ENCODE measurements at regions of chr19 and their contacts with region 1.

Region 1: DNA sequence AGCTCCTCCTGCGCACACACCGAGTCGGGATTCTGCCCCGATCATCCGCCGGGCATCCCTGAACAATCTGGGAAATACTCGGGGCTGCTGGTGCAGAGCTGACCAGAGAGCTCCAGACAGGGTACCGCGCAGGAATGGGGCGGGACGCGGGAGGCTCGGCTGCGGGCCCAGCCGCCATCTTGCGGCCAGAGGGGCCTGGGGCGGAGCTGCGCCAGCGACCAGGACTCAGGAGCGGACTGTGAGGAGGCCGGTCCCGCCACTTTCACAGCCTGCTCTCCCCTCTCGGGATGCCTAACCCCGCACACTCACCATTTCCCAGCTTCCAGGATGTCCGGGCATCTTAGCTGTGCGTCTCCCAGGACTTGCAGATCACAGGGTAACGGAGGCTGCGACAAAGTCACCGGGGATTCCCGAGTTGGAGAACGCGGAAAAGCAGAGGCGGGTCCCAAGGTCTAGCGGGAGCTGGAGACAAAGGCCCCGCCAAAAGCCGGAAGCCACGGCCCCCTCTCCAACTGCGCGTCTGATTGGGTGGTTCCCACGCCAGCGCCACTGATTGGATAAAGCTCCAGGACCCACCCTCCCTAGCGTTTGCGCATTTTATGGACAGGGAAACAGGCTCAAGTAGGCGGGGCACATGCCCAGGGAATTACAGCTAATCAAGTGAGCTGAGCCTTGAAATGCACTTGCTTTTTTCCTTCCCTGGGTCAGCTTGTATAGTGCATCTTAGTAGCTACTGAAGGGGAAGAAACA is 15.8 kb upstream of the ZNF43 start:
- DNase-seq: peak; percentile 85 to 98
- H3K4me3 ChIP-seq: peak overlapping the region; percentile 80 to 81
- H3K27ac ChIP-seq: peak overlapping the region; percentile 74 to 81
- H3K4me1 ChIP-seq: peaks cover 0 to 9% of the 10 kb centered on the region in 2 donors
- H3K27me3 ChIP-seq: no peaks in the 10 kb centered on the region
- CTCF ChIP-seq: peak in 1 of 3 experiments; percentile 1

Region 2: DNA sequence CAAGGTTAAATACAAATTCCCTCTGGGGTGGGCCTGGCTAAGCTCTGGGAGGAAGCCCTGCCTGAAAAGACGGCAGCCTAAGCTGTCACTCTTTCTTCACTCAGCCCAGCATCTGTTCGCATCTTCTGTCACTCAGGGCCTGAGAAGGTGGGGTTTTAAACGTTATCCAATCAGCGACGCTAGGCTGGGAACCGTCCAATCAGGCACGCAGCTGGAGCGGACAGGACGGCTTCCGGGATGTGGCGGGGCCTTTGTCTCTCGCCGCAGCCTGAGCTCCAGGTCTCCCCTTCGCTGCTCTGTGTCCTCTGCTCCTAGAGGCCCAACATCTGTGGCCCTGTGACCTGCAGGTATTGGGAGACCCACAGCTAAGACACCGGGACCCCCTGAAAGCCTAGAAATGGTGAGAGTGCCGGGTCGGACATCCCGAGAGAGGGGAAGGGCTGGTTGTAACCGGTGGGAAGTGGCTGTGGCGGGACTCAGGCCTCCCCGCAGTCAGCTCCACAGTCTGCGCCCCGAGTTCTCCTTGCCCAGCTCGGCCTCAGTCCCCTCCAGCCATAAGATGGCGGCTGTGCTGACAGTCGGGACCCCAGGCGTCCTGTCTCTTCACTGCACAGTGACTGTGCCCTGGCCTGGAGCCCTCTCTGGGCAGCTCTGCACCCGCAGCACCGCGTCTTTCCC is 709.8 kb before region 1 on chr19 and contains the start of gene ZNF431:
- intact Hi-C with region 1: loop called (anchors 5 kb)
- DNase-seq: peak; percentile 78 to 95
- H3K4me3 ChIP-seq: peak within 1 kb of the TSS; percentile 74 to 82
- H3K27ac ChIP-seq: peak within 1 kb of the TSS; percentile 68 to 70
- H3K4me1 ChIP-seq: peaks cover 0 to 5% of the 10 kb centered on the region in 2 donors
- H3K27me3 ChIP-seq: no peaks in the 10 kb centered on the region
- CTCF ChIP-seq: no peak
- total RNA-seq, gene ZNF431: 10.2 TPM

Region 3: GRCh38 chr19:21767065-21767800 is 84.5 kb before region 1 on chr19 and contains the start of gene ZNF100:
- intact Hi-C with region 1: loop called (anchors 2 kb)
- DNase-seq: peak; percentile 76 to 96
- H3K4me3 ChIP-seq: peak within 1 kb of the TSS; percentile 59 to 86
- H3K27ac ChIP-seq: peak within 1 kb of the TSS; percentile 88 to 89
- H3K4me1 ChIP-seq: peaks cover 0 to 3% of the 10 kb centered on the region in 2 donors
- H3K27me3 ChIP-seq: no peaks in the 10 kb centered on the region
- CTCF ChIP-seq: no peak
- total RNA-seq, gene ZNF100: 4.2 TPM

Region 4: DNA sequence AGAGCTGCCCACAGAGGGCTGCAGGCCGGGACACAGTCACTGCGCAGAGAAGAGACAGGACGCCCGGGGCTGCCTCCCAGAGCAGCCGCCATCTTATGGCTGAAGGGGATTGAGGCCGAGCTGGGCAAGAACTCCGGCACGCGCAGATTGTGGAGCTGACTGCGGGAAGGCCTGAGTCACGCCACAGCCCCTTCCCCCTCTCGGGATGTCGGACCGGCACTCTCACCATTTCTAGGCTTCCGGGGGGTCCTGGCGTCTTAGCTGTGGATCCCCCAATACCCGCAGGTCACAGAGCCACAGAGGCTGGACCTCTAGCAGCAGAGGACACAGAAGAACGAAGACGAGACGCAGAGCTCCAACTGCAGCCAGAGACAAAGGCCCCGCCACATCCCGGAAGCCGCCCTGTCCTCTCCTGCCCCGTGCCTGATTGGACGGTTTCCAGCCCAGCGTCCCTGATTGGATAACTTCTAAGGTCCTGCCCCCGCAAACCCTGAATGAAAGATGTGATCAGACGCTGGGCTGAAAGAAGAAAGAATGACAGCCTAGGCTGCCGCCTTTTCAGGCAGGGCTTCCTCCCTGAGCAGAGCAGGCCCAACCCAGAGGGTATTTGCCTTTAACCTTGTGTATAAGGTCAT is 15.8 kb before region 1 on chr19 and contains the start of gene ZNF43:
- intact Hi-C with region 1: loop called (anchors 1 kb)
- DNase-seq: peak; percentile 93 to 98
- H3K4me3 ChIP-seq: peak within 1 kb of the TSS; percentile 88 to 91
- H3K27ac ChIP-seq: peak within 1 kb of the TSS; percentile 77 to 91
- H3K4me1 ChIP-seq: peaks cover 3 to 7% of the 10 kb centered on the region in 2 donors
- H3K27me3 ChIP-seq: no peaks in the 10 kb centered on the region
- CTCF ChIP-seq: no peak
- total RNA-seq, gene ZNF43: 8.4 TPM

Measured in ascending aorta (tissue), 2 donors.